Naive thymus-derived CD4-positive, alpha-beta T cell (primary cell): ENCODE measurements at regions of chr17 and their contacts with region 1.

Region 1: GRCh38 chr17:28726226-28727130 is at the start of gene TLCD1:
- DNase-seq: peak; percentile 79 to 93 (median 87)
- ATAC-seq: peak; percentile 65
- H3K4me3 ChIP-seq: peak within 1 kb of the TSS; percentile 83
- H3K4me3 Mint-ChIP-seq: peak within 1 kb of the TSS; percentile 82 to 98 (median 96)
- H3K27ac ChIP-seq: peak within 1 kb of the TSS; percentile 100
- H3K27ac Mint-ChIP-seq: peak within 1 kb of the TSS; percentile 93 to 100 (median 98)
- H3K4me1 ChIP-seq: peaks cover 27 to 37% of the 10 kb centered on the region in 2 donors
- H3K4me1 Mint-ChIP-seq: peaks cover 12 to 63% (median 52%) of the 10 kb centered on the region in 7 donors
- H3K27me3 ChIP-seq: no peaks in the 10 kb centered on the region
- H3K27me3 Mint-ChIP-seq: no peaks in the 10 kb centered on the region
- total RNA-seq, gene TLCD1: 0.69 to 3.0 (median 0.79) TPM in 3 of 5 experiments, not detected in the others

Region 2: GRCh38 chr17:28563475-28563874 is 163.0 kb before region 1 on chr17:
- CTCF ChIA-PET with region 1: no interaction called
- POLR2A ChIA-PET with region 1: no interaction called
- intact Hi-C with region 1: no loop called
- DNase-seq: no peak
- ATAC-seq: no peak
- H3K4me3 ChIP-seq: no peak overlapping the region
- H3K4me3 Mint-ChIP-seq: no peak overlapping the region
- H3K27ac ChIP-seq: no peak overlapping the region
- H3K27ac Mint-ChIP-seq: no peak overlapping the region
- H3K4me1 ChIP-seq: no peaks in the 10 kb centered on the region
- H3K4me1 Mint-ChIP-seq: peaks cover 13 to 29% (median 24%) of the 10 kb centered on the region in 7 donors
- H3K27me3 ChIP-seq: no peaks in the 10 kb centered on the region
- H3K27me3 Mint-ChIP-seq: no peaks in the 10 kb centered on the region

Region 3: DNA sequence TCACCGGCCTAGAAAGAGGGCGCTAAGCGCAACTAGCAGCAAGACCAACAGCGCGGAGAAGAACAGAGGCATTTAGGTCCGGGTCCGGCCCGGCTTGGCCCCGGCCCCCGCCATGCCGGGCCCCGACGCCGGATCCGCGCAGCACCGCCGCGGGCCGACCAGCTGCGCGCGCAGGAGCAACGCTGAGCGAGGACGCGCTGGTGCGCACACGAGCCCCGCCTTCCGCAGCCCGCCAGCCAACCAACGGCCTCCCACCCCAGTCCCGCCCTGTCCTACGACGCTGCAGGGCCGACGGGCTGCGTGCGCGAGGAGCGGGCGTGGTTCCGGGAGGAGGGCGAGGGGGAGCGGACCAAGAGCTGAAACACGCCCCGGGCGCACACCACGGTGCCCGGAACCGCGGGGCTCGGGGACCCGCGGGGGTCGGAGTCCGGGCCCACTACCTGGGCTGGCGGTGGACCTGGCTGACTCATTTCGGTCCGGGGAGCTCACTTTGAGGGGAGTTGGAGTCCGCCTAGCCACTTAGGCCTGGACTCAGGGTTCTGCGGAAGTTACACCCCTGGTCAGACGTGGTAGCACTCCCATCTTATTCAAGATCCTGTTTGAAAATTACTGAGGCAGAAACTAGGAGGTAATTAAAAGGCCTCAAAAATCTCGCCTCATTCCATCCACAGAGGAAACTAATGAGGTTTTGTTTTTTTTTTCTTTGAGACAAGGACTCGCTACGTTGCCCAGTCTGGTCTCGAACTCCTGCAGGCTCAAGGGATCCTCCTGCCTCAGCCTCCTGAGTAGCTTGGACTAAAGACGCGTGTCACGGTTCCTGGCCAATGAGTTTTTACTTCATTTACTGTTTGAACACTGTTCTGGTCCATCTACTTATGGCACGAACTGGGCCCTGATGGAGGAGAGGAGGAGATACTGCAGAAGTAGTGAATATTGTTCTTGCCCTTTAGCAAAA is 81.2 kb before region 1 on chr17 and contains the start of gene BLTP2:
- CTCF ChIA-PET with region 1: interaction called, 8 read pairs
- POLR2A ChIA-PET with region 1: interaction called, 8 read pairs
- intact Hi-C with region 1: loop called (anchors 2 to 5 kb)
- DNase-seq: peak; percentile 86 to 95 (median 93)
- ATAC-seq: peak; percentile 99
- H3K4me3 ChIP-seq: peak within 1 kb of the TSS; percentile 87
- H3K4me3 Mint-ChIP-seq: peak within 1 kb of the TSS; percentile 89 to 99 (median 94)
- H3K27ac ChIP-seq: peak within 1 kb of the TSS; percentile 95
- H3K27ac Mint-ChIP-seq: peak within 1 kb of the TSS; percentile 90 to 99 (median 97)
- H3K4me1 ChIP-seq: peaks cover 26 to 29% of the 10 kb centered on the region in 2 donors
- H3K4me1 Mint-ChIP-seq: peaks cover 29 to 57% (median 39%) of the 10 kb centered on the region in 7 donors
- H3K27me3 ChIP-seq: no peaks in the 10 kb centered on the region
- H3K27me3 Mint-ChIP-seq: no peaks in the 10 kb centered on the region
- total RNA-seq, gene BLTP2: 143 to 163 (median 153) TPM

Region 4: GRCh38 chr17:28750178-28751047 is 23.9 kb after region 1 on chr17:
- CTCF ChIA-PET with region 1: interaction called, 331 read pairs
- POLR2A ChIA-PET with region 1: interaction called, 269 read pairs
- intact Hi-C with region 1: loop called (anchors 1 kb)
- DNase-seq: peak; percentile 73 to 87 (median 82)
- ATAC-seq: peak; percentile 96
- H3K4me3 ChIP-seq: no peak overlapping the region
- H3K4me3 Mint-ChIP-seq: peak overlapping the region in 1 of 10 donors; percentile 51
- H3K27ac ChIP-seq: peak overlapping the region; percentile 2
- H3K27ac Mint-ChIP-seq: peak overlapping the region in 4 of 9 donors; percentile 11 to 52 (median 38)
- H3K4me1 ChIP-seq: peaks cover 6 to 14% of the 10 kb centered on the region in 2 donors
- H3K4me1 Mint-ChIP-seq: peaks cover 0 to 29% (median 15%) of the 10 kb centered on the region in 7 donors
- H3K27me3 ChIP-seq: no peaks in the 10 kb centered on the region
- H3K27me3 Mint-ChIP-seq: no peaks in the 10 kb centered on the region

Region 5: GRCh38 chr17:28792877-28793661 is 66.6 kb after region 1 on chr17:
- CTCF ChIA-PET with region 1: no interaction called
- POLR2A ChIA-PET with region 1: no interaction called
- intact Hi-C with region 1: no loop called
- DNase-seq: no peak
- ATAC-seq: no peak
- H3K4me3 ChIP-seq: no peak overlapping the region
- H3K4me3 Mint-ChIP-seq: no peak overlapping the region
- H3K27ac ChIP-seq: no peak overlapping the region
- H3K27ac Mint-ChIP-seq: peak overlapping the region in 3 of 9 donors; percentile 25 to 61 (median 55)
- H3K4me1 ChIP-seq: peaks cover 0 to 6% of the 10 kb centered on the region in 2 donors
- H3K4me1 Mint-ChIP-seq: peaks cover 19 to 44% (median 41%) of the 10 kb centered on the region in 7 donors
- H3K27me3 ChIP-seq: no peaks in the 10 kb centered on the region
- H3K27me3 Mint-ChIP-seq: no peaks in the 10 kb centered on the region

Region 6: DNA sequence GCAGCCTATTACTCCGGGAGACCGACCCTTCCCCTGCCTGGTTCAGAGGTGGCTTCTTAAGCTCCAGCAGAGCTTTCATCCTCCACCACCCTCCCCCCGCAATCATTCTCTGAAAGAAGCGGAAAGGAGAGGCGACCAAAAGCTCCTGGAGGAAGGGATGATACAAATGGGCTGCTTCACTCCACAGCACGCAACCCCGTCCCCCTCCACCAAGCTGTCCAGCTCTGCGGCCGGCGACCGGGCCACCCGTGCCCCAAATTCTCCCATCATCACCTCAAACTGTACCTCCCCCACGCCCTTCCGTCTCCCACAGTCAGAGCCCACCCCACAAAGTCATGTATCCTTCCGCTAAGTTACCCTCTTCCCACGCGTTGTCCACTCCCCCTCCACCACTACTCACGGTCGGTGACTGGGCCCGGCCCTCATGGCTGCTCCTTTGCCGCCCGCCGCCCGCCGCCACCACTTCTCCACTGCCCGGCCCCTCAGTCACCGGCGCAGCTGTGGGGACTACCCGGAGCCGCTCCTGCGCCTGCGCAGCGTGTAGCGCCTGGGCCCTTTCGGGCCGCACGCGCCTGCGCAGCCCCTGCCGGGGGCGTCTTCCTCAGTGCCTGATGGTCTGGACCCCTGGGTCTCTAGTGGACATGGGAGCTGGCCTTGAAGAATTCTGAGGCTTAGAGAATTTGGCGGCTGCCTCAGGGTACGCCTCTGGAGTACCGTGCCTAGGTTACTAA is 116.0 kb after region 1 on chr17 and contains the start of gene FAM222B:
- CTCF ChIA-PET with region 1: interaction called, 4 read pairs
- POLR2A ChIA-PET with region 1: interaction called, 4 read pairs
- intact Hi-C with region 1: loop called (anchors 1 to 2 kb)
- DNase-seq: peak; percentile 80 to 91 (median 86)
- ATAC-seq: peak; percentile 98
- H3K4me3 ChIP-seq: peak within 1 kb of the TSS; percentile 77
- H3K4me3 Mint-ChIP-seq: peak within 1 kb of the TSS; percentile 96 to 100 (median 98)
- H3K27ac ChIP-seq: peak within 1 kb of the TSS; percentile 78
- H3K27ac Mint-ChIP-seq: peak within 1 kb of the TSS; percentile 83 to 97 (median 92)
- H3K4me1 ChIP-seq: peaks cover 8 to 13% of the 10 kb centered on the region in 2 donors
- H3K4me1 Mint-ChIP-seq: peaks cover 6 to 31% (median 26%) of the 10 kb centered on the region in 7 donors
- H3K27me3 ChIP-seq: no peaks in the 10 kb centered on the region
- H3K27me3 Mint-ChIP-seq: no peaks in the 10 kb centered on the region
- total RNA-seq, gene FAM222B: 16.5 to 24.4 (median 22.3) TPM

Region 7: GRCh38 chr17:28896884-28897768 is 170.6 kb after region 1 on chr17 and contains the start of gene FLOT2:
- CTCF ChIA-PET with region 1: interaction called, 7 read pairs
- POLR2A ChIA-PET with region 1: interaction called, 35 read pairs
- intact Hi-C with region 1: loop called in 1 of 2 experiments (anchors 1 kb)
- DNase-seq: peak; percentile 41 to 77 (median 76)
- ATAC-seq: peak; percentile 84
- H3K4me3 ChIP-seq: peak within 1 kb of the TSS; percentile 82
- H3K4me3 Mint-ChIP-seq: peak within 1 kb of the TSS; percentile 86 to 98 (median 96)
- H3K27ac ChIP-seq: peak within 1 kb of the TSS; percentile 96
- H3K27ac Mint-ChIP-seq: peak within 1 kb of the TSS; percentile 95 to 99 (median 97)
- H3K4me1 ChIP-seq: peaks cover 43 to 45% of the 10 kb centered on the region in 2 donors
- H3K4me1 Mint-ChIP-seq: peaks cover 32 to 80% (median 64%) of the 10 kb centered on the region in 7 donors
- H3K27me3 ChIP-seq: no peaks in the 10 kb centered on the region
- H3K27me3 Mint-ChIP-seq: no peaks in the 10 kb centered on the region
- total RNA-seq, gene FLOT2: 134 to 252 (median 191) TPM

Region 8: GRCh38 chr17:28925912-28926365 is 199.5 kb after region 1 on chr17:
- CTCF ChIA-PET with region 1: interaction called, 10 read pairs
- POLR2A ChIA-PET with region 1: interaction called, 6 read pairs
- intact Hi-C with region 1: no loop called
- DNase-seq: peak in 7 of 9 donors; percentile 66 to 89 (median 82)
- ATAC-seq: peak; percentile 96
- H3K4me3 ChIP-seq: peak overlapping the region; percentile 31
- H3K4me3 Mint-ChIP-seq: peak overlapping the region; percentile 34 to 82 (median 60)
- H3K27ac ChIP-seq: peak overlapping the region; percentile 88
- H3K27ac Mint-ChIP-seq: peak overlapping the region; percentile 93 to 99 (median 96)
- H3K4me1 ChIP-seq: peaks cover 26 to 38% of the 10 kb centered on the region in 2 donors
- H3K4me1 Mint-ChIP-seq: peaks cover 35 to 65% (median 54%) of the 10 kb centered on the region in 7 donors
- H3K27me3 ChIP-seq: no peaks in the 10 kb centered on the region
- H3K27me3 Mint-ChIP-seq: no peaks in the 10 kb centered on the region

Region 9: GRCh38 chr17:29148790-29149430 is 422.4 kb after region 1 on chr17:
- CTCF ChIA-PET with region 1: no interaction called
- POLR2A ChIA-PET with region 1: no interaction called
- intact Hi-C with region 1: loop called in 1 of 2 experiments (anchors 10 kb)
- DNase-seq: peak; percentile 82 to 97 (median 89)
- ATAC-seq: peak; percentile 99
- H3K4me3 ChIP-seq: peak overlapping the region; percentile 58
- H3K4me3 Mint-ChIP-seq: peak overlapping the region; percentile 70 to 84 (median 77)
- H3K27ac ChIP-seq: peak overlapping the region; percentile 73
- H3K27ac Mint-ChIP-seq: peak overlapping the region; percentile 71 to 93 (median 87)
- H3K4me1 ChIP-seq: peaks cover 9 to 22% of the 10 kb centered on the region in 2 donors
- H3K4me1 Mint-ChIP-seq: peaks cover 37 to 59% (median 45%) of the 10 kb centered on the region in 7 donors
- H3K27me3 ChIP-seq: no peaks in the 10 kb centered on the region
- H3K27me3 Mint-ChIP-seq: no peaks in the 10 kb centered on the region